ENCODE measurements at regions of chr22 and their contacts with region 1.

Region 1: DNA sequence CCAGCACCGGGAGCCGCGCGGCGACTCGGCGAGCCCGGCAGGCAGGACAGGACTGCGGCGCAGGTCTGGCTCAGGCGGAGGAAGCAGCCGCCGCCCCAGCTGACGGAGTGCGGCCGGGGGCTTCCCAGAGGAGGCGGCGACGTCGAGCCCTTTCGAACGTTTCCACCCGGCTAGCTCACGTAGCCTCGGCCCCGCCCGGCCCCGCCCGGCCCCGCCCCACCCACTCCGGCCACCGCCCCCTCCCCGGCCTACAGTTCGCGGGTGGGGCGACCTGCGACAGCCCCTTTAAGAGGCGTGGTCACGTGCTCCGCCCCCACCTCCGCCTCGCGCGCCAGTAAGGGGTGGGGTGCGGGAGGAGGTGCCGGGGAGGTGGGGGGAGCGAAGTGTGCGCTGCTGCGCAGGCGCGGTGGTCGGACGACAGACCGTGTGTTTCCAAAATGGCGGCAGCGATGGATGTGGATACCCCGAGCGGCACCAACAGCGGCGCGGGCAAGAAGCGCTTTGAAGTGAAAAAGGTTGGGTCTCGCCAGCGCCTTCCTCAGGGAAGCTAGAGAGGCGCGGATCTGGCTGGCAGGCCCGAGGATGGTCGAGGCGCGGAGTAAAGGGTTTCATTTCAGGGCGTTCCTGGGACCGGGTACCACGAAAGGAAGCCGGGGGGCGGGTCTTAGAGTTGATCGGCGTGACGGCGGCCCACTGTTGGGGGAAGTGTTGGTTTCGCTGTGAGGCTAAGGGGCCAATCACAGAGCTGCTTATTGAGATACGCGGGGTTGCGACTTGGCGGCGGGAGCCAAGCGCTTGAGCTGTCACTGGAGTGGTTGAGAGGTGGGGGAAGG is at the start of gene RBX1:
- DNase-seq: peak; percentile 99
- ATAC-seq: peak; percentile 81
- H3K4me3 Mint-ChIP-seq: peak within 1 kb of the TSS; percentile 97
- H3K27ac Mint-ChIP-seq: peak within 1 kb of the TSS; percentile 98
- H3K4me1 Mint-ChIP-seq: peaks cover 26% of the 10 kb centered on the region
- H3K27me3 Mint-ChIP-seq: peaks cover 2% of the 10 kb centered on the region
- total RNA-seq, gene RBX1: 68.6 to 73.6 TPM

Region 2: DNA sequence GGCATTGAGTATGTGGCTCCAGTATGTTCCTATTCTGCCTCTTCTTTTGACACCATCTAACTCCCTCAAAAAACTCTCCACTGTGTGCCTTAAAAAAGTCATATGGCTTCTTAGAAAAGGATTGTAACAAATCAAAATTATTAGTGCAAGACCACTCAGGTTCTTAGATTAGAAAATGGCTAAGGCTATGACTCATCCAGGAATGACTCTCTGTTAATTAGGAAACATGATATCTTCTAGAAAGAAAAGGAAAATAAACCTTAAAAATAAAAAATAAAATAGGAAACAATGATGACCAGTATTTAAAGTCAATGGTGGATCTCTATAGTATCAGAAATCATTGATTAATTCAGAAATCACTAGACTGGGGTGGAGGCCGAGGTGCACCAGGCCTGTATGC is 153.8 kb before region 1 on chr22:
- POLR2A ChIA-PET with region 1: no interaction called
- DNase-seq: no peak
- ATAC-seq: no peak
- H3K4me3 Mint-ChIP-seq: no peak overlapping the region
- H3K27ac Mint-ChIP-seq: no peak overlapping the region
- H3K4me1 Mint-ChIP-seq: peaks cover 4% of the 10 kb centered on the region
- H3K27me3 Mint-ChIP-seq: no peaks in the 10 kb centered on the region

Region 3: DNA sequence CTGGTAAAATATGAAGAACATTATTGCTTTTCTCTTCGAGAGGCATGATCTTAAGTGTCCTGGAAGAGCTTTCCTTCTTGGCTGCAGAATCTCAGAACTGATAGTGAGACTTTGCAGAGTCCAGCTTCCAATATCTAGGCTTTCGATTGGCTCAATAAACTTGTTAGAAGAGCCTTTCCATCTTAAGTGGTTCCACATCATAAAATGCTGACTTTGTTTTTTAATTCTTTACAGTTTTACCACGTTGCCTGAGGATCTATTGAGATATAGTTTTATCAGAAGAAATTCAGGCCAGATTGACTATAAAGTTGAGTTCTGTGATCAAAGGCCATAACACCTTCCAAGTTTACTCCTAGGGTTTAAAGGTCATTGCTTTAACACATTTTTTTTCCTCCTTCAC is 73.7 kb before region 1 on chr22:
- POLR2A ChIA-PET with region 1: no interaction called
- DNase-seq: no peak
- ATAC-seq: no peak
- H3K4me3 Mint-ChIP-seq: no peak overlapping the region
- H3K27ac Mint-ChIP-seq: no peak overlapping the region
- H3K4me1 Mint-ChIP-seq: no peaks in the 10 kb centered on the region
- H3K27me3 Mint-ChIP-seq: no peaks in the 10 kb centered on the region

Region 4: DNA sequence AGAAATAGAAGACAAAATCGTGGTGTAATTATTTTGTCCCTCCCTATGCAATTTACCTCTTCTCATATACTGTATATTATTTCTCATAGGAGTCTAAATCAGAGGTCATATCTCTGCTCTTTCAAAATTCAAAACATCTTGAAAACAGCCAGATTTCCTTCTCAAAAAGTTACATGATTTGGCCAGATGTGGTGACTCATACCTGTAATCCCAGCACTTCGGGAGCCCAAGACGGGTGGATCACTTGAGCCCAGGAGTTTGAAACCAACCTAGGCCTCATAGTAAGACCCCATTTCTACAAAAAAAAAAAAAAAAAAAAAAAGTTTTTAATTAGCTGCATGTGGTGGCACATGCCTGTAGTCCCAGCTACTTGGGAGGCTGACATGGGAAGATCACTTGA is 60.3 kb before region 1 on chr22:
- POLR2A ChIA-PET with region 1: no interaction called
- DNase-seq: no peak
- ATAC-seq: no peak
- H3K4me3 Mint-ChIP-seq: no peak overlapping the region
- H3K27ac Mint-ChIP-seq: no peak overlapping the region
- H3K4me1 Mint-ChIP-seq: peaks cover 6% of the 10 kb centered on the region
- H3K27me3 Mint-ChIP-seq: no peaks in the 10 kb centered on the region

Region 5: DNA sequence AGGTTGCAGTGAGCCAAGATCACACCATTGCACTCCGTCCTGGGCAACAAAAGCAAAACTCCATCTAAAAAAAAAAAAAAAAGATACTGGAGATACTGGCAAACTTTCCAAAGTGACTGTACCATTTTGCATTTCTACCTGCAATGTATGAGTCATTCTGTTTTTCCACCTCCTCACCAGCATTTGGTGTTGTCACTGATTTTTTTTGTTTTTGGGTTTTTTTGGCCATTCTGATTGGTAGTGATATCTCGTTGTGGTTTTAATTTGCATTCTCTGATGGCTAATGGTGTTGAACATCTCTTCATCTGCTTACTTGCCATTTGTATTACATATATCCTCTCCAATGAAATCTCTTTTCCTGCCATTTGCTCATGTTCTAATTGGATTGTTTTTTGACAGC is 12.0 kb before region 1 on chr22:
- POLR2A ChIA-PET with region 1: interaction called, 14 read pairs
- DNase-seq: no peak
- ATAC-seq: no peak
- H3K4me3 Mint-ChIP-seq: no peak overlapping the region
- H3K27ac Mint-ChIP-seq: no peak overlapping the region
- H3K4me1 Mint-ChIP-seq: no peaks in the 10 kb centered on the region
- H3K27me3 Mint-ChIP-seq: no peaks in the 10 kb centered on the region

Region 6: DNA sequence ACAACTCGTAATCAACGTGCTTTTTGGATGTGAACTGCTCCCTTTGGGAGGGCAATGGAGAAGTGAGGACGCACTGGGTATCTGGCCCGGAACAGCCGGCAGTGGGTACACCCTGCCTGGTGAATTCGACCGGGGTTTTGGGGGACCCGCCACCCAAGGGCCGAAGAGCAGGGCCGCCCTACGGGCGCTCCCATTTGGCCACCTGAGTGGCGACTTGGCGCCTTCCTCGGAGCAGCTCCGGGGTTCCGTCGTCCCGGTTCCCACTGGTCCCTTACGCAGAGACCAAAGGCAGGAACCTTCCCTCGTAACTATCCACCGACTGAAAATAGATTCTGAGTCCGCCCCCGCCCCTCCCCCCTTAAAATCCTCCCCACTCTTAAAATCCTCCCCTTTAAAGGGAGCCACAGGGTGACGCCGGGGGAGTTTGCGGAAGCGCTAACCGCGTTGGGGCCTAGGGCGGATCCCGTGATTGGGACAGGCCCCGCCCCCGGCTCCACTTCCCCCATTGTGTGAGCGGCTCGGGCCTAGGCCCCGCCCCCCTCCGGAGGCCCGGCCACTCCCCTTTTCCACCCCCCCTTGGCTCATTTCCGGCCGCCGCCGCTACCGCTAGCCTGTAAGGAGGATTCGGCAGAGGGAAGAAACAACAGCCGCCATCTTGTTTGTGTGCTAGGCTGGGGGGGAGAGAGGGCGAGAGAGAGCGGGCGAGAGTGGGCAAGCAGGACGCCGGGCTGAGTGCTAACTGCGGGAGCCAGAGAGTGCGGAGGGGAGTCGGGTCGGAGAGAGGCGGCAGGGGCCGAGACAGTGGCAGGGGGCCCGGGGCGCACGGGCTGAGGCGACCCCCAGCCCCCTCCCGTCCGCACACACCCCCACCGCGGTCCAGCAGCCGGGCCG is 140.2 kb after region 1 on chr22:
- POLR2A ChIA-PET with region 1: interaction called, 118 read pairs
- DNase-seq: peak; percentile 99
- ATAC-seq: peak; percentile 81
- H3K4me3 Mint-ChIP-seq: peak overlapping the region; percentile 96
- H3K27ac Mint-ChIP-seq: peak overlapping the region; percentile 100
- H3K4me1 Mint-ChIP-seq: peaks cover 20% of the 10 kb centered on the region
- H3K27me3 Mint-ChIP-seq: no peaks in the 10 kb centered on the region

Region 7: DNA sequence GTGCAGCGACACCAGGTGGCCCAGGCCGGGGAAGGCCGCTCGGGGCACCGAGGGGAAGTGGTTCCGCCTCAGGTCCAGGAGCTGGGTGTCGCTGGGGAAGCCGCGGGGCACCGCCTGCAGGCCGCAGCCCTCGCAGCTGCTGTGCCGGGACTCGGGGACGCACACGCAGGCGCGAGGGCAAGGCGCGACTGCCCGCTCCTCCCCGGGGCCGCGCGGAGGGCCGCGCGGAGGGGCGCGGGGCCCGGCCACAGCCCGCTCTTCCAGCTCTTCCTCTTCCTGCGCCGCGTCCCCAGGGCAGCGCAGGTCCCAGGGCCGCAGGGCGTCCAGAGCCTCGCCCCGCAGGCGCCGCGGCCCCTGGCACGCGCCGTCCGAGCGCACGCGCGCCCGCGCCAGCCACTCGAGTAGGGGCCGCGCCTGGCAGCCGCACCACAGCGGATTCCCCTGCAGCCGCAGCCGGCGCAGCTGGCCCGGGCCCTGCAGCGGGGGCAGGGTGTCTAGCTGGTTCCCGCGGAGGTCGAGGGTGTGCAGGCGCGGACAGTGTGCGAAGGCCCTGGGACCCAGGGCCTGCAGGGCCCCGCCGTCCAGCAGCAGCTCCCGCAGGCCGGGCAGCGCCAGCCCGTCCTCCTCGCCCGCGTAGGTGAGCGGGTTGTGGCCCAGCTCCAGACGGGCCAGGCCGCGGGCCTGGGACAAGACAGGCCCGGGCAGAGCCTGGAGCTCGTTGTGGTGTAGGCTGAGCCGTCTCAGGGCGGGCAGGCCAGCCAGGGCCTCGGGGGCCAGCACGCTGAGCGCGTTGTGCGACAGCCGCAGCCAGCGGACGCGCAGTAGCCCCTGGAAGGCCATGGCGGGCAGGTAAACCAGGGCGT is 286.8 kb after region 1 on chr22:
- POLR2A ChIA-PET with region 1: interaction called, 11 read pairs
- DNase-seq: peak; percentile 90
- ATAC-seq: peak; percentile 95
- H3K4me3 Mint-ChIP-seq: peak overlapping the region; percentile 68
- H3K27ac Mint-ChIP-seq: no peak overlapping the region
- H3K4me1 Mint-ChIP-seq: peaks cover 5% of the 10 kb centered on the region
- H3K27me3 Mint-ChIP-seq: no peaks in the 10 kb centered on the region